GM12878 (cell line): ENCODE measurements at regions of chr1 and their contacts with region 1.

Region 1: DNA sequence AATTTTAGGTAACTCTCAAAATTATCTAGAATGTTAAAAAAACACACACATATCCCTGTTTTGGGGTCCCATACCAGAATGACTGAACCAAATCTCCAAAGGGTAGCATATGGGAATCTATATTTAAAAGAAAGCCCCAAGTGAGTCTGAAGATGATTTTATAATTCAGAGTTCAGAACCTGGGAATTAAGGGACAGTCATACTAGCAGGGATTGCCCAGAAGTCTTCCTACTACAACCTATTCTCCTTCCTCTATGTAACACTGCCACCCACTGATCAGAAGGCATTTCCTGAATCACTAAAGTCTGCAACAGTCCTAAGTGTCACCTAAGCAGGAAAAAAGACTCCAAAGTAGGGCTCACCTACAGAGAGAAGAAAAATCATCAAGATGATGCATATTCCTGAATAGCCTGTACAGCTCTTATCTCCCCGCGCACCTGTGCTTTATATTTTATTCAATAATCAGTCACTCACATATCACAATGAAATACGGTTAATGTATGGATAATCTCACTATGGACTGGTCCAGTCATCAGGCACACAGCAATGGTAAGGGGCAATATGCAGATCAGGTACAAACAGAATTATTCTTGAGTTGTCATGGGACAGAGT is 4.9 kb downstream of the RGS1 start:
- DNase-seq: peak; percentile 81
- ATAC-seq: peak; percentile 33
- H3K4me3 ChIP-seq: peak overlapping the region; percentile 31; the same call in 1 of the 2 replicates
- H3K27ac ChIP-seq: no peak overlapping the region
- H3K4me1 ChIP-seq: no peaks in the 10 kb centered on the region
- H3K27me3 ChIP-seq: no peaks in the 10 kb centered on the region
- CTCF ChIP-seq: peak; percentile 29 to 70 (median 55); a peak in 5 of 6 replicates
- EP300 ChIP-seq: peak in 1 of 2 experiments; percentile 60; a peak in 2 of 4 replicates
- POLR2A ChIP-seq: peak; percentile 70; the same call in 1 of the 2 replicates
- RAD21 ChIP-seq: peak; percentile 95

Region 2: GRCh38 chr1:192539297-192540092 is 41.0 kb before region 1 on chr1:
- CTCF ChIA-PET with region 1: interaction called, 6 read pairs
- POLR2A ChIA-PET with region 1: interaction called, 21 read pairs
- RAD21 ChIA-PET with region 1: interaction called, 50 read pairs
- SMC1A ChIA-PET with region 1: interaction called, 125 read pairs
- in situ Hi-C with region 1: no loop called
- intact Hi-C with region 1: no loop called
- DNase-seq: no peak
- ATAC-seq: peak; percentile 40
- H3K4me3 ChIP-seq: no peak overlapping the region
- H3K27ac ChIP-seq: peak overlapping the region; percentile 81
- H3K4me1 ChIP-seq: peaks cover 24% of the 10 kb centered on the region
- H3K27me3 ChIP-seq: no peaks in the 10 kb centered on the region
- CTCF ChIP-seq: no peak
- EP300 ChIP-seq: no peak
- POLR2A ChIP-seq: no peak
- RAD21 ChIP-seq: no peak

Region 3: DNA sequence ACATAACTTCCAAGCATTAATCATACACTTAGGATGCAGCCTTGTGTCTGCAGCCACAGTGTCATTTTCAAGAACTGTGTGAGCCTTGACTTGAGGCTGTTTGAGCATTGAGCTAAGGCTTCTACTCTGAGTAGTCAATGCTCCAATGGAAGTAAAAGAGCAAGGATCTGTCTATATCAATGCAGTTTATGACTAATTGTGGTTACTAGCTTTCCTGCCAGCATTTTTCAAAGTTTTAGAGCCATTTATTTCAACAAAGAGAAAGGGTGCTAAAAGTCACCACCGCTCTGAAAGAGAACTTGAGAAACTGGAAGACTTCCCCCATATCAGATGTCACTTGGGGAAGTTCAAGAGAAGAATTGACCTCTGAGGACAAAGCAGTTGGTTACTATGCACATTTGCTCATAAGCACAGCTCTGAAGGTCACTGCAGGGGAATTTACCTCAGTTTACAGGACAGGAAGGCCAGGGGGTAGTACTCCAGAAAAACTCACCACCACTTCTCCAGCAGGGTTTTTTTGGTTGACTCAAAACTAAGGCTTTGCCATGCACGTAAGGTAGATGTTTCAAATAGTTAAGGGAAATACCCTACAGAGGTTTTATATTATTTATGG is 29.4 kb before region 1 on chr1:
- CTCF ChIA-PET with region 1: interaction called, 11 read pairs
- POLR2A ChIA-PET with region 1: interaction called, 34 read pairs
- RAD21 ChIA-PET with region 1: interaction called, 47 read pairs
- SMC1A ChIA-PET with region 1: interaction called, 125 read pairs
- in situ Hi-C with region 1: no loop called
- intact Hi-C with region 1: loop called (anchors 1 kb)
- DNase-seq: peak; percentile 89
- ATAC-seq: peak; percentile 56
- H3K4me3 ChIP-seq: no peak overlapping the region
- H3K27ac ChIP-seq: peak overlapping the region; percentile 88
- H3K4me1 ChIP-seq: peaks cover 48% of the 10 kb centered on the region
- H3K27me3 ChIP-seq: no peaks in the 10 kb centered on the region
- CTCF ChIP-seq: no peak
- EP300 ChIP-seq: peak; percentile 71 to 85; a peak in 2 of 4 replicates
- POLR2A ChIP-seq: 0 out of 2 replicates have a peak, but pooled peaks have one; percentile 13
- RAD21 ChIP-seq: no peak

Region 4: GRCh38 chr1:192592981-192593708 is 12.7 kb after region 1 on chr1:
- CTCF ChIA-PET with region 1: interaction called, 29 read pairs
- POLR2A ChIA-PET with region 1: interaction called, 16 read pairs
- RAD21 ChIA-PET with region 1: interaction called, 8 read pairs
- SMC1A ChIA-PET with region 1: interaction called, 79 read pairs
- in situ Hi-C with region 1: no loop called
- intact Hi-C with region 1: no loop called
- DNase-seq: no peak
- ATAC-seq: no peak
- H3K4me3 ChIP-seq: no peak overlapping the region
- H3K27ac ChIP-seq: no peak overlapping the region
- H3K4me1 ChIP-seq: no peaks in the 10 kb centered on the region
- H3K27me3 ChIP-seq: no peaks in the 10 kb centered on the region
- CTCF ChIP-seq: no peak
- EP300 ChIP-seq: no peak
- POLR2A ChIP-seq: no peak
- RAD21 ChIP-seq: no peak

Region 5: GRCh38 chr1:192941722-192942411 is 361.4 kb after region 1 on chr1:
- CTCF ChIA-PET with region 1: no interaction called
- POLR2A ChIA-PET with region 1: no interaction called
- RAD21 ChIA-PET with region 1: no interaction called
- SMC1A ChIA-PET with region 1: no interaction called
- in situ Hi-C with region 1: no loop called
- intact Hi-C with region 1: no loop called
- DNase-seq: no peak
- ATAC-seq: peak; percentile 41
- H3K4me3 ChIP-seq: no peak overlapping the region
- H3K27ac ChIP-seq: no peak overlapping the region
- H3K4me1 ChIP-seq: no peaks in the 10 kb centered on the region; the same call in 1 of the 2 replicates
- H3K27me3 ChIP-seq: no peaks in the 10 kb centered on the region
- CTCF ChIP-seq: no peak
- EP300 ChIP-seq: no peak
- POLR2A ChIP-seq: no peak
- RAD21 ChIP-seq: no peak

Region 6: GRCh38 chr1:193121616-193122593 is 541.4 kb after region 1 on chr1 and contains the start of gene CDC73:
- CTCF ChIA-PET with region 1: no interaction called
- POLR2A ChIA-PET with region 1: no interaction called
- RAD21 ChIA-PET with region 1: no interaction called
- SMC1A ChIA-PET with region 1: no interaction called
- in situ Hi-C with region 1: no loop called
- intact Hi-C with region 1: loop called (anchors 5 kb)
- DNase-seq: peak; percentile 89
- ATAC-seq: peak; percentile 93
- H3K4me3 ChIP-seq: peak within 1 kb of the TSS; percentile 91
- H3K27ac ChIP-seq: peak within 1 kb of the TSS; percentile 92
- H3K4me1 ChIP-seq: no peaks in the 10 kb centered on the region; the same call in 1 of the 2 replicates
- H3K27me3 ChIP-seq: no peaks in the 10 kb centered on the region
- CTCF ChIP-seq: peak; percentile 87 to 96 (median 88)
- EP300 ChIP-seq: peak in 1 of 2 experiments; percentile 25; a peak in 1 of 4 replicates
- POLR2A ChIP-seq: peak; percentile 97
- RAD21 ChIP-seq: peak; percentile 74
- polyA plus RNA-seq, gene CDC73: 21.0 to 21.3 TPM